ENCODE measurements at regions of chr10 and their contacts with region 1.

Region 1: GRCh38 chr10:84429926-84430520 is 101.6 kb downstream of the CCSER2 start:
- DNase-seq: peak; percentile 31
- ATAC-seq: peak; percentile 99
- H3K4me3 ChIP-seq: no peak overlapping the region
- H3K27ac ChIP-seq: no peak overlapping the region
- H3K4me1 ChIP-seq: no peaks in the 10 kb centered on the region
- H3K27me3 ChIP-seq: no peaks in the 10 kb centered on the region
- CTCF ChIP-seq: peak; percentile 73 to 88 (median 77)
- EP300 ChIP-seq: no peak
- POLR2A ChIP-seq: no peak
- RAD21 ChIP-seq: peak; percentile 54

Region 2: DNA sequence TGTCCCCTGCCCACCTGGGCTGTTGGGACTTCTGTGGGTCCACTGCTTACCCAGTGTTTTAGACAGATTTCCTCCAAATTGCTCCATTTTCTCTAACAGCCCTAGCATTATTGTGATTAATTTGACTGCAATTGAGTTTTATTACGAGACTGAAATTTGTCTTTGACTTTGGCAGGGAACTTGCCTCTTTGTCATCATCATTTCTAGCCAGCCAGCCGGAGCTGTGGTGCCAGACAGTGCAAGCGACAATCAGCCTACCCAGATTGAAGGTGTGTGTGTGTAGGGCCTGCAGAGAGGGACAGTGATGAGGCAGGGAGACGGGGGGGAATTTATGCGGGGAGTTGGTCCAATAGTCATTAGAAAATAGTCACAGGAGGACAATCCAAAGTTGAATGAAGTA is 1812.0 kb before region 1 on chr10:
- CTCF ChIA-PET with region 1: no interaction called
- POLR2A ChIA-PET with region 1: no interaction called
- RAD21 ChIA-PET with region 1: no interaction called
- SMC1A ChIA-PET with region 1: no interaction called
- in situ Hi-C with region 1: no loop called
- intact Hi-C with region 1: no loop called
- DNase-seq: no peak
- ATAC-seq: no peak
- H3K4me3 ChIP-seq: no peak overlapping the region
- H3K27ac ChIP-seq: no peak overlapping the region
- H3K4me1 ChIP-seq: no peaks in the 10 kb centered on the region
- H3K27me3 ChIP-seq: no peaks in the 10 kb centered on the region
- CTCF ChIP-seq: no peak
- EP300 ChIP-seq: no peak
- POLR2A ChIP-seq: no peak
- RAD21 ChIP-seq: no peak

Region 3: DNA sequence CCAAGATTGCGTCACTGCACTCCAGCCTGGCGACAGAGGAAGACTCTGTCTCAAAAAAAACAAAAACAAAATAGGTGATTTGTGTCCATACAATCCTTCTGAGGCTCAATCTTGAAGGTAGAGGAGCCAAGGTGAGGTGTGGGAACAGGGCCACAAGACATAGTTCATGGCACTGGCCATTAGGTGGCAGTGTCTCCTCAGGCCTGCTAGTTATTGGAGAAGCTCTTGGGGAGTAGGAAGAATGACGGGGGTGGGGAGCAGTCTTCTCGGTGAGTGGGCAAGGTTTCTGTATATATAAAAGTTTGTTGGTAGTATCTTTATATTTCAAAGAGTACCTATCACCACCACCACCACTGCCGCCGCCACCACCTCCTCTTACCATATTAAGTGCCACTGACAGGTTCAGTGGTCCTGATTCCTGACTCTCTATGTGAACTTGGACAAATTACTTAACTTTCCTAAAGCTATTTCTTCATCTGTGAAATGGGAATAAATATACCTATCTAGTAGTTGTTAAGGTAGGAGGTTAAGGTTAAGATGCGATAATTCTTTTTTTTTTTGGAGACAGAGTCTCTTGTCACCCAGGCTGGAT is 77.7 kb before region 1 on chr10:
- CTCF ChIA-PET with region 1: interaction called, 22 read pairs
- POLR2A ChIA-PET with region 1: no interaction called
- RAD21 ChIA-PET with region 1: no interaction called
- SMC1A ChIA-PET with region 1: interaction called, 8 read pairs
- in situ Hi-C with region 1: no loop called
- intact Hi-C with region 1: no loop called
- DNase-seq: no peak
- ATAC-seq: peak; percentile 99
- H3K4me3 ChIP-seq: no peak overlapping the region
- H3K27ac ChIP-seq: no peak overlapping the region
- H3K4me1 ChIP-seq: no peaks in the 10 kb centered on the region
- H3K27me3 ChIP-seq: no peaks in the 10 kb centered on the region
- CTCF ChIP-seq: peak; percentile 81 to 90 (median 87)
- EP300 ChIP-seq: no peak
- POLR2A ChIP-seq: no peak
- RAD21 ChIP-seq: peak; percentile 83

Region 4: DNA sequence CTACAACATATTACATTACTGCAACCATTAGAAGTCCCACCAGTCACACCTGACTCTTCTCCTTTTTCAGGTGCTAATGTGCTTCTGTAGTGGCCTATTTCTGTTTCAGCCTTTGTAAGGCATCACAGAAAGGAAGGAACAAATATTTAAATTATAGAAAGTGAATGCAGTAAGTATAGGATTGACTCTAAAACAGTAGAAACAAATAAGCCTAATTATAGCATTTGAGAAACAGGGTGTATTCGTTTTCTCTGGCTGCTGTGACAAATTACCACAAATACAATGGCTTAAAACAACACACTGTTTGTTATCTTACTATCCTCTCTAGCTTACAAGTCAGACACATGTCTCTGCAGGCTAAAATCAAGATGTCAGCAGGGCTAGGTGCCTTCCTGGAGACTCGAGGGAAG is 32.3 kb before region 1 on chr10:
- CTCF ChIA-PET with region 1: interaction called, 17 read pairs
- POLR2A ChIA-PET with region 1: no interaction called
- RAD21 ChIA-PET with region 1: no interaction called
- SMC1A ChIA-PET with region 1: interaction called, 4 read pairs
- in situ Hi-C with region 1: no loop called
- intact Hi-C with region 1: no loop called
- DNase-seq: no peak
- ATAC-seq: peak; percentile 62
- H3K4me3 ChIP-seq: no peak overlapping the region
- H3K27ac ChIP-seq: no peak overlapping the region
- H3K4me1 ChIP-seq: 0 out of 2 replicates have a peak, but pooled peaks cover 6% of the 10 kb centered on the region
- H3K27me3 ChIP-seq: no peaks in the 10 kb centered on the region
- CTCF ChIP-seq: no peak
- EP300 ChIP-seq: no peak
- POLR2A ChIP-seq: no peak
- RAD21 ChIP-seq: no peak

Region 5: DNA sequence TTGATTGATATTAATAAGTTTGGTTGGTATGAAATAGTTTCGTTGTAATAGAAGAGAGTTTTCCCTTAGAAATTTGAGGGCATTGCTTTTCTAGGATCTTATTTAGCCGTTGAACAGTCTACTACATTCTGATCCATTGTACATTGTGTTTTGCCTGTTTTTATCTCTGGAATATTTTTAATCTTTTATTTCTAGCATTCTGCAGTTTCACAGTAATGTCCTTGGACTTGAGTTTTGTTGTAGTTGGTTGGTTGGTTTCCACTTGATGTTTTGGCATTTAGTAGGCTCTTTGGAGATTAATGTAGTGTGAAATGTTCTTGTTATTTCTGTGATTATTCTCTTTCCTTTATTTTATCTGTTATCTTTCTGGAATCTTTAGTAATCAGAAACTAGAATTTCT is 10.8 kb after region 1 on chr10:
- CTCF ChIA-PET with region 1: interaction called, 17 read pairs
- POLR2A ChIA-PET with region 1: no interaction called
- RAD21 ChIA-PET with region 1: interaction called, 4 read pairs
- SMC1A ChIA-PET with region 1: no interaction called
- in situ Hi-C with region 1: no loop called
- intact Hi-C with region 1: no loop called
- DNase-seq: no peak
- ATAC-seq: no peak
- H3K4me3 ChIP-seq: no peak overlapping the region
- H3K27ac ChIP-seq: no peak overlapping the region
- H3K4me1 ChIP-seq: no peaks in the 10 kb centered on the region
- H3K27me3 ChIP-seq: no peaks in the 10 kb centered on the region
- CTCF ChIP-seq: no peak
- EP300 ChIP-seq: no peak
- POLR2A ChIP-seq: no peak
- RAD21 ChIP-seq: no peak

Region 6: DNA sequence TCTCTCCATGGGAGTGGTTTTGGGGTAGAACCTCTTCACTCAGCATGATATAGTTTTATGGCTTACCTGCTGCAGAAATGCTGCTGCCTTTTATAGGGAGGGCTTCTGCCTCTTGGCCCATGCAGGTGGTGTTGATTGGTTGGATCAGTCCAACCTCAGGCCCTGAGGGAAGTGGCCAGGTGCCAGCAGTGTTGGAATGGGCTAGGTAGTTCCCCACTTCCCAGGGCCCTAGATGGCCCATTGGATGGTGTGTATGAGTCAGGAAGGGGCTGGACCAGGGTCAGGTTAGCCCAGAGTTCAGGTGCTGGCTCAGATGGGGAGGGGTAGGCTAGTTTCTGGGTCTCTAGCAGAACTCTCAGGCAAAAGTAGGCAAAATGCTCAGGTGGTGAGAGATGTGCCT is 353.9 kb after region 1 on chr10:
- CTCF ChIA-PET with region 1: no interaction called
- POLR2A ChIA-PET with region 1: no interaction called
- RAD21 ChIA-PET with region 1: no interaction called
- SMC1A ChIA-PET with region 1: no interaction called
- in situ Hi-C with region 1: no loop called
- intact Hi-C with region 1: no loop called
- DNase-seq: no peak
- ATAC-seq: no peak
- H3K4me3 ChIP-seq: no peak overlapping the region
- H3K27ac ChIP-seq: no peak overlapping the region
- H3K4me1 ChIP-seq: no peaks in the 10 kb centered on the region
- H3K27me3 ChIP-seq: no peaks in the 10 kb centered on the region
- CTCF ChIP-seq: no peak
- EP300 ChIP-seq: no peak
- POLR2A ChIP-seq: no peak
- RAD21 ChIP-seq: no peak

Region 7: GRCh38 chr10:85194706-85195105 is 764.7 kb after region 1 on chr10:
- CTCF ChIA-PET with region 1: no interaction called
- POLR2A ChIA-PET with region 1: no interaction called
- RAD21 ChIA-PET with region 1: no interaction called
- SMC1A ChIA-PET with region 1: no interaction called
- in situ Hi-C with region 1: no loop called
- intact Hi-C with region 1: no loop called
- DNase-seq: no peak
- ATAC-seq: no peak
- H3K4me3 ChIP-seq: no peak overlapping the region
- H3K27ac ChIP-seq: no peak overlapping the region
- H3K4me1 ChIP-seq: no peaks in the 10 kb centered on the region
- H3K27me3 ChIP-seq: no peaks in the 10 kb centered on the region; a peak in 1 of 4 replicates
- CTCF ChIP-seq: no peak
- EP300 ChIP-seq: no peak
- POLR2A ChIP-seq: no peak
- RAD21 ChIP-seq: no peak